Transverse colon (tissue), 4 donors: ENCODE measurements at regions of chr3 and their contacts with region 1.

Region 1: GRCh38 chr3:99808151-99808794 is 9.4 kb upstream of the CMSS1 start:
- DNase-seq: peak; percentile 29
- H3K4me3 ChIP-seq: no peak overlapping the region
- H3K27ac ChIP-seq: no peak overlapping the region
- H3K4me1 ChIP-seq: no peaks in the 10 kb centered on the region
- H3K27me3 ChIP-seq: no peaks in the 10 kb centered on the region
- CTCF ChIP-seq: peak; percentile 44 to 77 (median 66)
- EP300 ChIP-seq: no peak
- POLR2A ChIP-seq: no peak

Region 2: DNA sequence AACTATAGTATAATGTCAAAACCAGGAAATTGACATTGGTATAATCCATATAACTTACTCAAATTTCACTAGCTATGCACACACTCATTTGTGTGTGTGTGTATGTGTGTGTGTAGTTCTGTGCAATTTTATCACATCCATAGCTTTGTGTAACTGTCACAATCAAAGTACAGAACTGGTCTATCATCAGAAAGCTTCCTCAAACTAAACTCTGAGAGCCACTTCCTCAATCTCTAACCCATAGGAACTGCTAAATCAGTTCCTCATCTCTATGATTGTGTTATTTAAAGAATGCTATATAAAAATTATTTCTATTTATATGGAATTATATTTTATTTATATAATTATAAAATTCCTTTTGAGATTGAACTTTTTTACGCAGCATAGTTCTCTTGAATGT is 611.1 kb after region 1 on chr3:
- in situ Hi-C with region 1: no loop called
- intact Hi-C with region 1: loop called (anchors 5 kb)
- DNase-seq: no peak
- H3K4me3 ChIP-seq: no peak overlapping the region
- H3K27ac ChIP-seq: no peak overlapping the region
- H3K4me1 ChIP-seq: peaks cover 0 to 5% (median 0%) of the 10 kb centered on the region in 4 donors
- H3K27me3 ChIP-seq: no peaks in the 10 kb centered on the region
- CTCF ChIP-seq: no peak
- EP300 ChIP-seq: no peak
- POLR2A ChIP-seq: no peak

Region 3: GRCh38 chr3:101495552-101495951 is 1687.3 kb after region 1 on chr3:
- in situ Hi-C with region 1: no loop called
- intact Hi-C with region 1: loop called (anchors 5 kb)
- DNase-seq: no peak
- H3K4me3 ChIP-seq: no peak overlapping the region
- H3K27ac ChIP-seq: no peak overlapping the region
- H3K4me1 ChIP-seq: no peaks in the 10 kb centered on the region
- H3K27me3 ChIP-seq: no peaks in the 10 kb centered on the region
- CTCF ChIP-seq: no peak
- EP300 ChIP-seq: no peak
- POLR2A ChIP-seq: no peak